ENCODE measurements at regions of chr3 and their contacts with region 1.

Region 1: GRCh38 chr3:127473244-127474024 is 117.1 kb downstream of the TPRA1 start:
- DNase-seq: peak; percentile 54
- H3K4me3 Mint-ChIP-seq: no peak overlapping the region
- H3K27ac Mint-ChIP-seq: no peak overlapping the region
- H3K4me1 Mint-ChIP-seq: no peaks in the 10 kb centered on the region
- H3K27me3 Mint-ChIP-seq: peaks cover 7% of the 10 kb centered on the region

Region 2: DNA sequence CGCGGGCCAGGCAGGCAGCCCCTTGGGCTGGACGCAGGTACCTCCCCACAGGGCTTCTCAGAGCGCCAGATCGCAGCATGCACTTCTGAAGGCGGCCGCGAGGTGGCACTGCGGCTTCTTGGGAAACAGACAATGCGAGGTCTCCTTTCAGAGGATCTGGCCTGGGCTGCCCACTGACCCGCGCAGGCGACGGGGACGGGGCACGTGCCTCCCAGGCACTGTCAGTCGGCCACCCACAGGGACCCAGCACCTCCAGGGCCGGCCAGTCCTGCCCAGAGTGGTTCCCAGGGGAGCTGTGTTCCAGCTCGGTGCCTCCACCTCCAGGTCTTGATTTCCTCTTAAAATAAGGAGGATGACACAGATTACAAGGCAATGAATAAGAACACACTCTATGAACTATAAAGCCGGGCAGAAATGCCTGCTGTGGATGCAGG is 794.1 kb before region 1 on chr3:
- CTCF ChIA-PET with region 1: interaction called, 5 read pairs
- POLR2A ChIA-PET with region 1: no interaction called
- intact Hi-C with region 1: loop called (anchors 5 kb)
- DNase-seq: peak; percentile 84
- H3K4me3 Mint-ChIP-seq: peak overlapping the region; percentile 28
- H3K27ac Mint-ChIP-seq: no peak overlapping the region
- H3K4me1 Mint-ChIP-seq: peaks cover 5% of the 10 kb centered on the region
- H3K27me3 Mint-ChIP-seq: peaks cover 13% of the 10 kb centered on the region

Measured in activated CD4-positive, alpha-beta memory T cell treated with anti-CD3 and anti-CD28 coated beads for 36 hours (primary cell).